ENCODE measurements at regions of chr1 and their contacts with region 1.

Region 1: DNA sequence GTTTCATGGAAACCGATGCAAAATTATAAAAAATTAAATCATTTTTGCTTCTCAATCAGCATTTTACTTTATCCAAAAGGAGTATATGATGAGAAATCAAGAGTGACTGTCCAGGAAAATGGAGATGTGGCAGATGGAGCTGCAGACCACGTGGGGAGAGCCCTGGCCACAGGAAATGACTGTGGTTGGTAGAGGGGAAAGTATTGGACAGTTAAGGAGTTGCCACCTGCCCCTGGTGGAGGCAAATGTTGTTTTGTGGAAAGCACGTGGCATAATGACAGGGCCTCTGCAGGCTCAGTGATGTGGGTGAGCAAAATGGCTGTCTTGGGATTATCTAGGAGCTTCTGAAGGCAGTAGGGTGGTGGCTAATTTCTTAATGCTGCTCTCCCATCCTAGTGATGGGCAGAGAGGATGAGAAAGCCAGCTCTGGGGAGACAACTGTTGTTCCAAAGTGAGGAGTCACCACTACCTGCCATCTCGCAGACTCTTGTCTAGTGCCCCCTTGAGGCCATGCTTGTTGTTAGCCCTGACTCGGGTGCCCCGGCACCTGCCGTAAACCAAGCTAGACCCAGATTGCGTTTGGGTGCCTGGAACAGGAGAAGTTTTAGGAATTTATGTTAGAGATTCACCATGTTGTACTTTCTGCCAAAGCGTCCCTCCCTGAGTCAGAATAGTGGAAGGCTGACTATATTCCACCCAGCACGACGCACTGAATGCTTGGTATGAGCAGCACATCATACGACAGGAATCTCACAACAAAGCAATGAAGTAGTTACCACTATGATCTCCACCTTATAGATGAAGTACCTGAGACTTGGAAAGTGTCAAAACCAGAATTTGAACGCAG is 144.0 kb downstream of the ROR1 start:
- DNase-seq: no peak
- H3K4me3 ChIP-seq: no peak overlapping the region
- H3K4me3 Mint-ChIP-seq: no peak overlapping the region
- H3K27ac ChIP-seq: no peak overlapping the region
- H3K27ac Mint-ChIP-seq: no peak overlapping the region
- H3K4me1 ChIP-seq: no peaks in the 10 kb centered on the region
- H3K4me1 Mint-ChIP-seq: no peaks in the 10 kb centered on the region
- H3K27me3 ChIP-seq: no peaks in the 10 kb centered on the region
- H3K27me3 Mint-ChIP-seq: peaks cover 2 to 7% of the 10 kb centered on the region in 2 donors

Region 2: DNA sequence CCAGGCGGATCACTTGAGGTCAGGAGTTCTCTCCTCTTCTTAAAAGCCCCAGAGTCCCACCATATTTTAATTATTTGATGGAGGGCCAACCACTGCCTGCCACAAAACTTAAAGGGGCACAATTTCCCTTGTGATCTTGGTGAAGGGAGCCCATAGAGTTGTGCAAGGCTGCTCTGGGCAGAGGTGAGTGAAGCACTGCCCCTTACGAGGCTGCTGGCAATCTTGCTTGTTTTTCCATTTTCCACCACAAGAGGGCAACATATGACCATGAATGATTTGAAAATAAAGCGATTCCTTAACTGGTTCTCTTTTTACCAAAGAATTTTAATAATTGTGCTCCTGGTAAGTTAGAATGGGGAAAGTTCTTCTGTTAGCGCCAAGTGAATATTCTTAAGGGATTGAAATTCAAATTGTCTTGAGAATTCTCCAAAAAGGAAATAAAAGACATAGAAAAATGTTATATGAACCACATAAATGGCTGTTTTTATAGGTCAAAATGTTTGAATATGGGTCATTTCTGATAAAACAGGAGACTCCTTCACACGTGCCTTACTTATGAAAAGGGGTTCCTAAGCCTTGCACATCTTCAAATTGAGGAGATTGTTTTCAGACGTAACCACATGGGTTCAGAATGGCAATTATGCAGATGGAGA is 301.9 kb before region 1 on chr1:
- CTCF ChIA-PET with region 1: interaction called, 5 read pairs
- POLR2A ChIA-PET with region 1: no interaction called
- intact Hi-C with region 1: loop called (anchors 5 kb)
- DNase-seq: peak; percentile 49 to 76 (median 67)
- H3K4me3 ChIP-seq: no peak overlapping the region
- H3K4me3 Mint-ChIP-seq: no peak overlapping the region
- H3K27ac ChIP-seq: no peak overlapping the region
- H3K27ac Mint-ChIP-seq: peak overlapping the region in 1 of 7 donors; percentile 58
- H3K4me1 ChIP-seq: no peaks in the 10 kb centered on the region
- H3K4me1 Mint-ChIP-seq: peaks cover 0 to 10% (median 2%) of the 10 kb centered on the region in 4 donors
- H3K27me3 ChIP-seq: no peaks in the 10 kb centered on the region
- H3K27me3 Mint-ChIP-seq: no peaks in the 10 kb centered on the region